Activated CD4-positive, alpha-beta memory T cell treated with anti-CD3 and anti-CD28 coated beads for 36 hours (primary cell): ENCODE measurements at regions of chr11 and their contacts with region 1.

Region 1: DNA sequence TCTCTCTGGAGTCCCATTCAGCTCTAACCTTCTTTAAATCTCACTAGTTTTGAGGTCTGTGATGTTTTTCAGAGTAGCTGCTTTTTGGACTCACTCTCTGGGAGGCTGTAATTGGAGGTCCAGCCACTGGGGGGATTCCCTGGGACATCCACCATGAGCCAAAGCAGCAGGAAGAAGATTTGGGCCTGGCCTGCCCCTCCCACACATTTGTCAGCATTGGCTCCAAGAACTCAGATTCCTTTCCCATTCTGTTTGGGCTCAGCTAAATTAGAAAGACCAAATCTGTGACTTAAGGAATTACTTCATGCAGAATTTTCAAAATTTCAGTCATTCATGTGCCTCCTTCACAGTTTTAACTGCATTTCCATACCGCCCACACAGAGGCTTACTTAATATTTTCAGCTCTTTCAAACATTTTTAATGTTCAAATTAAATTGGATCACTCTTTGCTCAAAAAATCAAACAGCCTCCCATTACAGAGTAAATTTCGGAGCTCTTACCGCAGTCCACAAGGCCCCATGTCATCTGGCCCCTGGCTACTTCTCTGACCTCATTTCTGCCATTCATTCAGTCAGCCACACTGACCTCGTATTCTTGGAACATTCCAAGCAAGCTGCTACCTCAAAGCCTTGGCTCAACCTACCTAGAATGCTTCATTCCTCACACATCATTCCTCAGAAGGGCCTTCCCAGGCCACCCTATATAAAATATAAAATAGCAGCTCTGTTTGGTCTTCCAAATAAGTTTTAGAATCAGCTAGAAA is 54.5 kb upstream of the RRAS2 start:
- DNase-seq: peak; percentile 37
- H3K4me3 Mint-ChIP-seq: no peak overlapping the region
- H3K27ac Mint-ChIP-seq: no peak overlapping the region
- H3K4me1 Mint-ChIP-seq: peaks cover 35% of the 10 kb centered on the region
- H3K27me3 Mint-ChIP-seq: no peaks in the 10 kb centered on the region

Region 2: DNA sequence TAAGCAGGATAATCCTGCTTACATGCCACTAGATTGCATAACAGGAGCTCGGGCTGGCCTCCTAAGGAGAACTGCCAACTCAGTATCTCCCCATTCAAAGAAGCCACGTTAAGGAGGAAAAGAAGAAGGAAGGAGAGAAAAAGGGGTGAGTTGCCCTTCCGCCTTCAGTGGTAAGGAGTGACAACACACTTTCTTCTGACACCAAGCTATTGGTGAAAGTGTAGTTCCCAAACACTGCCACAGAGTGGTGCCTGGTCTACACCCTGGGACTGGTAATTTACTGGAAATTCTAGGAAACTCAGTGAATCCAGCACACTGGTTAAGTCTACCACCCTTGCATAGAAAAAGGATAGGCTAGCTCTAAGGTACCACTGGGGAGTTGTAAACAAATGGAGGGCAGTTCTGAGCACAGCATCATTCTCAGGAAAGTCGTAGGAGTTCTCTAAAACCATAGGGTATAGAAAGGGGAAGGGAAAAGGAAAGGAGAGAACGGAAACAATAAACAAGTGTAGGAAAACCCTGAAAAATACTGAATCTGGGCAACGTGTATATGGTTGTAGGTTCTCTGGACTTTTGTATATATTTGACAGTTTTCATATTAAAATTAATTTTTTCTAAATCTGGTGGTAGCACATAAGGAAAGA is 112.7 kb before region 1 on chr11:
- CTCF ChIA-PET with region 1: interaction called, 26 read pairs
- POLR2A ChIA-PET with region 1: no interaction called
- intact Hi-C with region 1: loop called (anchors 2 kb)
- DNase-seq: peak; percentile 66
- H3K4me3 Mint-ChIP-seq: no peak overlapping the region
- H3K27ac Mint-ChIP-seq: no peak overlapping the region
- H3K4me1 Mint-ChIP-seq: peaks cover 2% of the 10 kb centered on the region
- H3K27me3 Mint-ChIP-seq: no peaks in the 10 kb centered on the region

Region 3: GRCh38 chr11:14336507-14337503 is 76.7 kb before region 1 on chr11:
- CTCF ChIA-PET with region 1: interaction called, 3 read pairs
- POLR2A ChIA-PET with region 1: no interaction called
- intact Hi-C with region 1: loop called (anchors 1 kb)
- DNase-seq: no peak
- H3K4me3 Mint-ChIP-seq: no peak overlapping the region
- H3K27ac Mint-ChIP-seq: peak overlapping the region; percentile 67
- H3K4me1 Mint-ChIP-seq: peaks cover 51% of the 10 kb centered on the region
- H3K27me3 Mint-ChIP-seq: no peaks in the 10 kb centered on the region

Region 4: GRCh38 chr11:14358729-14359439 is 54.6 kb before region 1 on chr11 and contains the start of gene RRAS2:
- CTCF ChIA-PET with region 1: no interaction called
- POLR2A ChIA-PET with region 1: interaction called, 4 read pairs
- intact Hi-C with region 1: loop called (anchors 5 kb)
- DNase-seq: peak; percentile 83
- H3K4me3 Mint-ChIP-seq: peak within 1 kb of the TSS; percentile 92
- H3K27ac Mint-ChIP-seq: peak within 1 kb of the TSS; percentile 81
- H3K4me1 Mint-ChIP-seq: peaks cover 32% of the 10 kb centered on the region
- H3K27me3 Mint-ChIP-seq: no peaks in the 10 kb centered on the region
- total RNA-seq, gene RRAS2: 37.7 to 39.5 TPM

Region 5: GRCh38 chr11:14374922-14375830 is 38.3 kb before region 1 on chr11:
- CTCF ChIA-PET with region 1: interaction called, 4 read pairs
- POLR2A ChIA-PET with region 1: interaction called, 3 read pairs
- intact Hi-C with region 1: loop called (anchors 1 kb)
- DNase-seq: peak; percentile 33
- H3K4me3 Mint-ChIP-seq: no peak overlapping the region
- H3K27ac Mint-ChIP-seq: peak overlapping the region; percentile 59
- H3K4me1 Mint-ChIP-seq: peaks cover 38% of the 10 kb centered on the region
- H3K27me3 Mint-ChIP-seq: peaks cover 8% of the 10 kb centered on the region

Region 6: GRCh38 chr11:14443638-14444037 is 30.1 kb after region 1 on chr11:
- CTCF ChIA-PET with region 1: interaction called, 4 read pairs
- POLR2A ChIA-PET with region 1: no interaction called
- intact Hi-C with region 1: loop called (anchors 5 kb)
- DNase-seq: no peak
- H3K4me3 Mint-ChIP-seq: no peak overlapping the region
- H3K27ac Mint-ChIP-seq: no peak overlapping the region
- H3K4me1 Mint-ChIP-seq: peaks cover 37% of the 10 kb centered on the region
- H3K27me3 Mint-ChIP-seq: no peaks in the 10 kb centered on the region

Region 7: GRCh38 chr11:14454861-14455632 is 41.6 kb after region 1 on chr11:
- CTCF ChIA-PET with region 1: interaction called, 25 read pairs
- POLR2A ChIA-PET with region 1: no interaction called
- intact Hi-C with region 1: no loop called
- DNase-seq: no peak
- H3K4me3 Mint-ChIP-seq: no peak overlapping the region
- H3K27ac Mint-ChIP-seq: no peak overlapping the region
- H3K4me1 Mint-ChIP-seq: no peaks in the 10 kb centered on the region
- H3K27me3 Mint-ChIP-seq: no peaks in the 10 kb centered on the region